ENCODE measurements at regions of chr19 and their contacts with region 1.

Region 1: DNA sequence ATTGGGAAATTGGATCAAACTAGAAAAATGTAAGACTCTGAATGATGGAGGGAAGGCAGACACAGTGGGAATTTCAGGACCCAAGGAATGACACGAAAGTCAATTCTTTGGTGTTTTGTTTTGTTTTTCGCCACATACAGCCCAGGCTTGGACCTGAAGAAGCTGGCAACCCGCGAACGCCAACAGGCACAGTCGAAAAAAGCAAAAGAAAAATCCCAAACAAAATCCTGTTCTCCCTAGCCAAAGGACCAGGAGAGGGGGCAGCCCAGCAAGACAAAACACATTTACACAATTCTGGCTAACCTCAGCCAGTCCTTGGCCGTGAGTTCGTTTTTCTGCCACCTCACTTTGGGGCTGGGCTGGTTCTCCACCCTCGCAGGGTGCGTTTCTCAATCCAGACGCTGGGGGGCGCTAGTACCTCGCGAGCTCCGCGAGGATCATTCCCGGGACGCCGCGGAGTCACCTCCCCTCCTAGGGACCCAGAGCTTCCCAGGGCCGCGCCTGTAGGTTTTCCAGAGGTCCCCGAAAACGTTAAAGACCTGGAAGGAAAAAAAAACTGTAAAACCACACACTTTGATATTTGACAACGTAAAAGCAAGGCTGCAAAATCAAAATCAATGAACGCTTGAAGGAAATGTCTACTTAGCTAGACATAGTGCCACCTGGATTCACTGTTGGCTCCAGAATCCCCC is 34.9 kb upstream of the TPM4 start:
- DNase-seq: peak; percentile 66 to 95 (median 82)
- ATAC-seq: peak; percentile 99
- H3K4me3 ChIP-seq: no peak overlapping the region
- H3K27ac ChIP-seq: no peak overlapping the region
- H3K4me1 ChIP-seq: peaks cover 5 to 8% of the 10 kb centered on the region in 2 donors
- H3K27me3 ChIP-seq: no peaks in the 10 kb centered on the region
- CTCF ChIP-seq: peak; percentile 96 to 99

Region 2: GRCh38 chr19:16180611-16181010 is 139.2 kb after region 1 on chr19:
- intact Hi-C with region 1: loop called in 1 of 2 experiments (anchors 5 kb)
- DNase-seq: no peak
- ATAC-seq: no peak
- H3K4me3 ChIP-seq: no peak overlapping the region
- H3K27ac ChIP-seq: no peak overlapping the region
- H3K4me1 ChIP-seq: peaks cover 0 to 10% of the 10 kb centered on the region in 2 donors
- H3K27me3 ChIP-seq: peaks cover 0 to 16% of the 10 kb centered on the region in 2 donors
- CTCF ChIP-seq: no peak